Activated B cell treated with CpG ODN at 0.5 μM for 24 hours (primary cell): ENCODE measurements at regions of chr18 and their contacts with region 1.

Region 1: GRCh38 chr18:52869963-52870907 is 530.2 kb downstream of the DCC start:
- DNase-seq: no peak
- ATAC-seq: no peak
- H3K4me3 Mint-ChIP-seq: no peak overlapping the region
- H3K27ac Mint-ChIP-seq: no peak overlapping the region
- H3K4me1 Mint-ChIP-seq: no peaks in the 10 kb centered on the region
- H3K27me3 Mint-ChIP-seq: no peaks in the 10 kb centered on the region
- CTCF ChIP-seq: no peak

Region 2: GRCh38 chr18:52060607-52061304 is 809.5 kb before region 1 on chr18:
- CTCF ChIA-PET with region 1: no interaction called
- POLR2A ChIA-PET with region 1: no interaction called
- intact Hi-C with region 1: no loop called
- DNase-seq: no peak
- ATAC-seq: no peak
- H3K4me3 Mint-ChIP-seq: no peak overlapping the region
- H3K27ac Mint-ChIP-seq: no peak overlapping the region
- H3K4me1 Mint-ChIP-seq: no peaks in the 10 kb centered on the region
- H3K27me3 Mint-ChIP-seq: no peaks in the 10 kb centered on the region
- CTCF ChIP-seq: no peak

Region 3: DNA sequence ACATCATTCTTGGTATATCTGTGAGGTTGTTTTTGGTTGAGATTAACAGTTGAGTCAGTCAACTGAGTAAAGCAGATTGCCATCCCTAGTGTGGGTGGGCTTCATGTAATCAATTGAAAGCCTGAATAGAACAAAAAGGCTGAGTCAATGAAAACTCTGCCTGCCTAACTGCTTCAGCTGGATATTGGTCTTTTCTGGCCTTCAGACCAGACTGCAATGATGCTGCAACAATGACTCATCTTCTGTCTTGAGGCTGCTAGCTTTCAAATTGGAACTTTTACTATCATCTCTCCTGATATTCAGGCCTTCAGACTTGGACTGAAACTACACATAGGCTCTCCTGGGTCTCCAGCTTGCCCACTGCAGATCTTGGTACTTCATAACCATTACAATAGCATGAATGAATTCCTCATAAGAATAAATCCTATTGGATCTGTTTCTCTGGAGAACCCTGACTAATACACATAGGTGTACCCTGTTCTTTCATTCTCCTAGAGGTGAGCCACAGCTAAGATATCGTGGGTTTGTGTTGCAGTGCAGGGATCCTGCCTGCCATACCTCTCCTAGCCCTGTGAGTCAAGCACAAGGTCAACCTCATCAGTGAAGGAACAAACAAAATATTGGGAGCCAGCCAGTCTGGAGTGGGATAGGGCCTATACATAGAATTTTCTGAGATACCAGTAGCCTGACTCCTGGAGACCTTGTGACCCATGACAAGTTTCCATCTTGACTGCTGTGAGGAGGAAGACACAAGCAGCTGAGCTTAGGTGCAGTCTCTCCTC is 56.4 kb before region 1 on chr18:
- CTCF ChIA-PET with region 1: no interaction called
- POLR2A ChIA-PET with region 1: no interaction called
- intact Hi-C with region 1: loop called (anchors 10 kb)
- DNase-seq: no peak
- ATAC-seq: no peak
- H3K4me3 Mint-ChIP-seq: no peak overlapping the region
- H3K27ac Mint-ChIP-seq: no peak overlapping the region
- H3K4me1 Mint-ChIP-seq: no peaks in the 10 kb centered on the region
- H3K27me3 Mint-ChIP-seq: no peaks in the 10 kb centered on the region
- CTCF ChIP-seq: no peak

Region 4: GRCh38 chr18:52920665-52921064 is 50.4 kb after region 1 on chr18:
- CTCF ChIA-PET with region 1: no interaction called
- POLR2A ChIA-PET with region 1: no interaction called
- intact Hi-C with region 1: no loop called
- DNase-seq: no peak
- ATAC-seq: no peak
- H3K4me3 Mint-ChIP-seq: no peak overlapping the region
- H3K27ac Mint-ChIP-seq: no peak overlapping the region
- H3K4me1 Mint-ChIP-seq: no peaks in the 10 kb centered on the region
- H3K27me3 Mint-ChIP-seq: no peaks in the 10 kb centered on the region
- CTCF ChIP-seq: no peak

Region 5: GRCh38 chr18:53458944-53459580 is 588.8 kb after region 1 on chr18:
- CTCF ChIA-PET with region 1: no interaction called
- POLR2A ChIA-PET with region 1: no interaction called
- intact Hi-C with region 1: no loop called
- DNase-seq: no peak
- ATAC-seq: no peak
- H3K4me3 Mint-ChIP-seq: no peak overlapping the region
- H3K27ac Mint-ChIP-seq: no peak overlapping the region
- H3K4me1 Mint-ChIP-seq: no peaks in the 10 kb centered on the region
- H3K27me3 Mint-ChIP-seq: no peaks in the 10 kb centered on the region
- CTCF ChIP-seq: no peak